ENCODE measurements at regions of chr6 and their contacts with region 1.

Region 1: GRCh38 chr6:101163611-101164010 is 229.9 kb upstream of the GRIK2 start:
- DNase-seq: no peak
- ATAC-seq: no peak

Region 2: GRCh38 chr6:100751590-100751989 is 412.0 kb before region 1 on chr6:
- intact Hi-C with region 1: no loop called
- DNase-seq: no peak
- ATAC-seq: peak; percentile 71

Region 3: DNA sequence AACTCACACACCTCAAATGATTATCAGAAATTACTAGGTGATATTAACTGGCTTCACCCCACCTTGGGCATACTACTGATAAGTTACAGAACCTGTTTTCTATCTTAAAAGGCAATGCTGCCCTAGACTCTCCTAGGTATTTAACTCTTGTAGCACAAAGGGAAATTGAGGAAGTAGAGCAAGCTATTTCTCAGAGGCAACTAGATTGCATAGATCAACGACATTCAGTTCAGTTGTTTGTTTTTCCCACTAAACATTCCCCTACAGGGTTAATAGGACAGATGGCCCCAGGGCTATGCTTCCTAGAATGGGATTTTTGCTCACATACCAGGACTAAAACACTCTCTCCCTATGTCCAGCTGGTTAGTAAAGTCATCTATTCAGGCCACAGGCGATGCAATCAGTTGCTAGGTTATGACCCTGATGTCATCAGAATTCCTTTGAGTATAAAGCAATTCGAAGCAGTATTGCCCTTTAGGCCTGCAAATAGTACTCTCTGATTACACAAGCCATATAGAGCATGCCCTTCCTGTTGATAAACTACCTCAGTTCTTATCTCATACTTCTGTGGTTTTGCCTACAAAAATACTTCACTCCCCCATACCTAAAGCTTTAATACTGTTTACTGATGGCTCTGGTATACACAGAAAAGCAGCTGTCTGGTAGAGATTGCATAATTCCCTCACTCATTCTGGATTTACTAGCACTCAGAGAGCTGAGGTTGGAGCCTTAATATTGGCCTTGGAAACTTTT is 215.1 kb before region 1 on chr6:
- intact Hi-C with region 1: no loop called
- DNase-seq: no peak
- ATAC-seq: peak; percentile 94

Region 4: DNA sequence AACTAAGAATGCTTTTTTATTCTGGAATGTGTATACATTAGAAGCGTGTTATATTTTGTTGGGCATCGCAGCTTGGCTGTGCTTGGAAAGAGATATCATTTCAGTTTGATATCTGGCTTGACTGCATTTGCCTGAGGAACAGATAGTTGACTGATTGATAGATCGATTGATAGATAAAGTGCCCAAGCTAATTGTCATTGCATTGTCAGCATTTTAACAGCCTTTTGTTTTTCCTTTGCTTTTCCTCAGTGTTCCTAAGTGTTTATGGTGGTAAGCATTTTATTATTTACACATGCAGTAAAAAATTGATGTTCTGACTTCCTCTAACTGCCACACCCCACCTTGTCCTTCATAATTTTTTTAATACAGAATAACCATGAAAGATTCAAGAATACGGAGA is 49.0 kb after region 1 on chr6:
- intact Hi-C with region 1: no loop called
- DNase-seq: no peak
- ATAC-seq: no peak

Region 5: GRCh38 chr6:101296169-101296960 is 132.8 kb after region 1 on chr6:
- intact Hi-C with region 1: no loop called
- DNase-seq: no peak
- ATAC-seq: no peak

Region 6: DNA sequence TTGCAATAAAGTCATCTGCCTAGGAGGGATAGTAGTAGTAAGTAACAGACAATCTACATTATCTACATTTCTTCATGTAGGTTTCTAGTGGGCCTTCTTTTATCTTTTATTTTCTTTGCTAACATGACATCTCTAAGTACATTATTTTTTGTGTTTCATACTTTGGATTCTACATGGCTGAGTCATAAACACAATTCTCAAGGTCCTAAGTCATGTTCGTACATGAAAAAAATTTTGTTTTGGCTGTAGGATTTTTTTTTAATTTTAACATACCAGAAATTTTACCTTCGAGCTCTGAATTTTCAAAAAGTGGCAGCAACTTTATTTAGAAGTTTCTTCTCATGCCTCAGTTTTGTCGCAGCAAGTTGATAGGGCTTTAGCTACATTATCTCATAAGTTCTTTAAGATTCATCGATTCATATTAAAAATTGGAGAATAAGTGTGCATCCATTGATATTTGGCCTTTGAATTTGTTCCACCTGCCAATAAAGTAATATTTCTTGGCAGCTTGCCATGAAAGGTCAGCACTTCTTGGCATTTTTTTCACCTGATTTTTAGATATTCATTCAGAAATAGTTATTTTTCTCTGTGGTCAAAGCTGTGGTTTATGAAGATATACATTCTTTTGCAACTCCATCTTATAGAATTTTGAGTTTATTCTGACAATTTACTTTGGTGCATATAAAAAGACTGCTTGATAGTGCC is 376.1 kb after region 1 on chr6:
- intact Hi-C with region 1: loop called in 1 of 2 experiments (anchors 5 kb)
- DNase-seq: no peak
- ATAC-seq: no peak

Measured in left colon (tissue), 2 donors.